Aorta (tissue), 5 donors: ENCODE measurements at regions of chr12 and their contacts with region 1.

Region 1: DNA sequence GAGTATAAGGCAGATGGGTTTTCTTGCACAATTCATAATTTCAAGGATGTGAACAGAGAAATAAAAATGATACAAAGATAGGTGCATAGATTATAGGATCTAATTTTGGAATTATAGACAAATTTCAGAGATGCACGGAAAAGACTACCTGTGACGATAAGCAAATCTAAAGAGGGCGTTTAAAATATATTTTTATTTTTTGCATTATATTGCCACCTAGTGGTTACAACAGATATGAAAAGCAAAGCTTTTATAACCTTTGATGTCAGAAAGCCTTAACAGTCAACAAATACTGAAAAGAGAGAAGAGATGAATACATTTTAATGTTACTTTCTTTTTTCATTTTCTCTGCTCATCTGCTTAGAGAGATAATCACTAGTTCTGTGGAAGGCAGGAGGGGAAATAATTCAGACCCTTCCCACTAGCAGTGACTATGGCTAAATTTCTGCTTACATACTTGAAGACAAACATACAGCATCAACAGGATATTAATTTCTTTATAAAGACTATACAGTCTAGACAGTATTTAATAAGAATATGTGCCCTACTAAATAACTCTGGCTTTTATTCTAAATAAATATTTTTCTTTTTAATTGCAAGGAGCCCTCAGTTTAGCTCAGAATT is 46.3 kb downstream of the NTS start:
- DNase-seq: no peak
- ATAC-seq: no peak
- H3K4me3 ChIP-seq: no peak overlapping the region
- H3K27ac ChIP-seq: no peak overlapping the region
- H3K4me1 ChIP-seq: no peaks in the 10 kb centered on the region
- H3K27me3 ChIP-seq: no peaks in the 10 kb centered on the region

Region 2: GRCh38 chr12:85468356-85469157 is 451.9 kb before region 1 on chr12:
- intact Hi-C with region 1: loop called in 1 of 2 experiments (anchors 5 kb)
- DNase-seq: no peak
- ATAC-seq: peak; percentile 76
- H3K4me3 ChIP-seq: peak overlapping the region; percentile 10 to 41
- H3K27ac ChIP-seq: no peak overlapping the region
- H3K4me1 ChIP-seq: no peaks in the 10 kb centered on the region
- H3K27me3 ChIP-seq: no peaks in the 10 kb centered on the region

Region 3: DNA sequence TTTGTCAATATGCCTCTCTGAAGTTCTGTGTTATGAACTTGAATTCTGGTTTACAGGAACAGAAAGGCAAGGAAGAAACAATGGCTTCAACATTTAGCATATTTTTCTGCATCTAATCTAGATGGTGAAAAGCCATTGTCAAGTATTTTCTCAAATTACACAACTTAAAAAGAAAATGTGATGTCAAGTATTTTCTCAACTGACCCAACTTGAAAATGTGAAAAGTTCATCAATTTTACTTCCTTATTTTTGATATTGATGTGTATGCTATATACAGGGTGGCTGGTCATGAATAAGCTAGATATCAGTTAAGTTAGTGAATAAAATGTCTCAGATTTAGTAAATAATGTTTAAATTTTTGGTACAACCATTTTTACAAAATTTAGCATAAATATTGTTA is 443.7 kb before region 1 on chr12:
- intact Hi-C with region 1: loop called in 1 of 2 experiments (anchors 2 kb)
- DNase-seq: no peak
- ATAC-seq: no peak
- H3K4me3 ChIP-seq: no peak overlapping the region
- H3K27ac ChIP-seq: no peak overlapping the region
- H3K4me1 ChIP-seq: no peaks in the 10 kb centered on the region
- H3K27me3 ChIP-seq: no peaks in the 10 kb centered on the region

Region 4: DNA sequence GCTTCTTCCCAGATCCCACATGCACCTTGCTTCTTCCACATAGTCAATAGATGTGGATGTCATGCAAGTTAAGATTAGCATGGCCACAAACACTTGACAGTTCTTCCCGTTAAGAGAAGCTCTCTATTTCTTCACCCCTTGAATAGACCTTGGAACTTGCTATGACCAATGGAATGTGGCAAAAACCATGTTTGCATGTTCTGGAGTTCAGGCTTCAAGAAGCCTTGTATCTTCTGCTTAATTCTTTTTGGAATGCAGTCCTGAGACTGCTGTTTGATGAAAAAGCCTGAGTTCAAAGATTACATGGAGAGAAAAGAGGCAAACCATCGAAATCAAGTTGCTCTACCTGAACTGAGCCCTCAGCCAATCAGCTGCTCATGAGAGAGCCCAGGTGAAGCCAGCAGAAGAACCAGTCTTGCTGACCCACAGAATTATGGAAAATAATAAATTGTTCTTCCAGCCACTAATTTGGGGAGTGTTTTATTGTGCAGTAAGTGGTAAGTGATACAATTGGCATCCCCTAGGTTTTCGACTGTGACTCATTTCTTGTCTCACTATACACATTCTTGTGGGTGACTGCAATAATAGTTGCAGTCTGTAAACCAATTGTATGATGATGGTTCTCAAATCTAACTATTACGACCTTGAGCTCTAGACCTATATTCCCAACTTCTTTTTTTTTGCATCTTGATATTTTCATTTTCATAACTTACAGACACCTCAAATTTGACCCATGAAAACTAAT is 96.8 kb before region 1 on chr12:
- intact Hi-C with region 1: no loop called
- DNase-seq: no peak
- ATAC-seq: no peak
- H3K4me3 ChIP-seq: no peak overlapping the region
- H3K27ac ChIP-seq: no peak overlapping the region
- H3K4me1 ChIP-seq: peaks cover 0 to 2% of the 10 kb centered on the region in 2 donors
- H3K27me3 ChIP-seq: no peaks in the 10 kb centered on the region

Region 5: GRCh38 chr12:85971800-85972199 is 51.4 kb after region 1 on chr12:
- intact Hi-C with region 1: no loop called
- DNase-seq: no peak
- ATAC-seq: no peak
- H3K4me3 ChIP-seq: no peak overlapping the region
- H3K27ac ChIP-seq: no peak overlapping the region
- H3K4me1 ChIP-seq: no peaks in the 10 kb centered on the region
- H3K27me3 ChIP-seq: no peaks in the 10 kb centered on the region

Region 6: GRCh38 chr12:86186449-86186848 is 266.0 kb after region 1 on chr12:
- intact Hi-C with region 1: no loop called
- DNase-seq: no peak
- ATAC-seq: no peak
- H3K4me3 ChIP-seq: no peak overlapping the region
- H3K27ac ChIP-seq: no peak overlapping the region
- H3K4me1 ChIP-seq: no peaks in the 10 kb centered on the region
- H3K27me3 ChIP-seq: no peaks in the 10 kb centered on the region